ENCODE measurements at regions of chr2 and their contacts with region 1.

Region 1: DNA sequence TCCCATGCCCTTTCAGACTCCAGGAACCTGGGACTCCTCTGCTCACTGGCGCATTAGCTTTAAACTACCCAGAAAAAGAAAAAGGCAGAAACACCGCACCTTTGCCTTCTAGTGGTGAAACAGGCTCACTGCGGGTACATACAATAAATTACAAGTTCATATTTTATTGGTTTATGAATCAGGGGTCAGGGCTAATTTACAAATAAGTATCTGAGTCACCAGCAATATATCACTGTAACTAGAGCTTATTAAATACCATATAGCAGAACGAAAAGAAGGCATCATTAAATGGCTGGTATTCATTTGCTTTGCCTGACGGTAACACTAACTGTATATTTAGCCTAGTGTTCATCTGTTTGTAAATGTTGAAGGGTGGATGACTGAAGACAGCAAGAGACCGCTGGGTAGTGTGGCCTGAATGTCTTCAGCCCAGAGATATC is 26.9 kb upstream of the DTNB start:
- DNase-seq: no peak
- H3K4me3 ChIP-seq: no peak overlapping the region
- H3K27ac ChIP-seq: no peak overlapping the region
- H3K4me1 ChIP-seq: peaks cover 0 to 12% (median 6%) of the 10 kb centered on the region in 4 experiments; a peak in 6 of 7 replicates
- H3K27me3 ChIP-seq: peaks cover 0 to 8% (median under 1%) of the 10 kb centered on the region in 4 experiments; a peak in 2 of 7 replicates
- CTCF ChIP-seq: peak in 2 of 3 experiments; percentile 50 to 74; a peak in 2 of 4 replicates
- EP300 ChIP-seq: no peak
- POLR2A ChIP-seq: no peak
- RAD21 ChIP-seq: peak; percentile 63 to 64

Region 2: DNA sequence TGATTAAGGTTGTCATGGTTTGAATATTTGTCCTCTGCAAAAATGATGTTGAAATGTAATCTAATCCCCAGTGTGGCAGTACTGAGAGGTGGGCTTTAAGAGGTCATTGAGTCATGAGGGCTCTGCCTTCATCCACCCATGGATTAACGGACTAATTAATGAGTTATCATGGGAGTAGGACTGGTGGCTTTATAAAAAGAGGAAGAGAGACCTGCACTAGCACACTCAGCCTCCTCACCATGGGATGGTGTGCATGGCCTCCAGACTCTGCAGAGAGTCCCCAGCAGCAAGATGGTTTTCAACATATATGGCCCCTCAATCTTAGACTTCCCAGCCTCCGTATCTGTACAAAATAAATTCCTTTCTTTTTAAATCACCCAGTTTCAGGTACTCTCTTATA is 67.8 kb before region 1 on chr2:
- CTCF ChIA-PET with region 1: no interaction called
- POLR2A ChIA-PET with region 1: no interaction called
- DNase-seq: no peak
- H3K4me3 ChIP-seq: no peak overlapping the region
- H3K27ac ChIP-seq: no peak overlapping the region
- H3K4me1 ChIP-seq: no peaks in the 10 kb centered on the region
- H3K27me3 ChIP-seq: no peaks in the 10 kb centered on the region
- CTCF ChIP-seq: no peak
- EP300 ChIP-seq: no peak
- POLR2A ChIP-seq: no peak
- RAD21 ChIP-seq: no peak

Region 3: DNA sequence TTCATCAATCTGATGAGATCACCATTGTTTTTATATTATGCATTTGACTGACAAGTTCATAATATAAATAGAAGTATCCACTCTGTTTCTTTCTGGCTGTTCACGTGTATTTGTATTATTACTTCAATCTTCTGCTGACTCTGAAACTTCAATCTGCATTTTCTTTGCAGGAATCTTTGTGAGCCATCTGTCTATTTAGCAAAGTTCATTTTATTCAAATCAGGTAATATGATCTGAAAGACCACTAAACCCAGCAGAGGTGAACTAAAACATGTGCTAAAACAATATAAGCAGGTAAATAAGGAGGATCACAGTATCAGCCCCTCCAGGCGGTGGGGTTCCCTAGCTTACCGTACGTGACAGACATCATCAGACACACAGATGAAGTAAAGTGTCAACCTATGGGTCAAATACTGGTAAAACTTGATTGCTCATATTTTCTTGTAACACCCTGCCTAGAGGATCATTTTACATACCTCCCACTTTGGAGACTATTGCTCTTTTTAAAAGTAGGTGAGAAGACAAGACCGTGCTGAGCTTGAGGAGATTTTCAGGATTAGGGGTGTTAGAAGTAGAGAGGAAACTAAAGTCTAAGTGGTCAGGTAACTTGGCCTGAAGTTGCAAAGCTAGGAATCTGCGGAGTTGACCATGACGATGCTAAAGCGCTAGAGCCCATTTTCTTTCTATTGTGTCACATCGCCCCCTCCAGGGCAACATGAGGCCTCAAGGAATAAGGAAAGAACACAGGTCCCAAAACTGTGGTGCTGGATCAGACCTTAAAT is 35.9 kb before region 1 on chr2:
- CTCF ChIA-PET with region 1: interaction called, 48 read pairs
- POLR2A ChIA-PET with region 1: interaction called, 3 read pairs
- DNase-seq: peak; percentile 43 to 62
- H3K4me3 ChIP-seq: no peak overlapping the region
- H3K27ac ChIP-seq: no peak overlapping the region
- H3K4me1 ChIP-seq: peaks cover 0 to 8% (median 2%) of the 10 kb centered on the region in 4 experiments; a peak in 3 of 7 replicates
- H3K27me3 ChIP-seq: no peaks in the 10 kb centered on the region
- CTCF ChIP-seq: peak; percentile 50 to 87 (median 79)
- EP300 ChIP-seq: no peak
- POLR2A ChIP-seq: no peak
- RAD21 ChIP-seq: peak; percentile 87 to 91

Region 4: DNA sequence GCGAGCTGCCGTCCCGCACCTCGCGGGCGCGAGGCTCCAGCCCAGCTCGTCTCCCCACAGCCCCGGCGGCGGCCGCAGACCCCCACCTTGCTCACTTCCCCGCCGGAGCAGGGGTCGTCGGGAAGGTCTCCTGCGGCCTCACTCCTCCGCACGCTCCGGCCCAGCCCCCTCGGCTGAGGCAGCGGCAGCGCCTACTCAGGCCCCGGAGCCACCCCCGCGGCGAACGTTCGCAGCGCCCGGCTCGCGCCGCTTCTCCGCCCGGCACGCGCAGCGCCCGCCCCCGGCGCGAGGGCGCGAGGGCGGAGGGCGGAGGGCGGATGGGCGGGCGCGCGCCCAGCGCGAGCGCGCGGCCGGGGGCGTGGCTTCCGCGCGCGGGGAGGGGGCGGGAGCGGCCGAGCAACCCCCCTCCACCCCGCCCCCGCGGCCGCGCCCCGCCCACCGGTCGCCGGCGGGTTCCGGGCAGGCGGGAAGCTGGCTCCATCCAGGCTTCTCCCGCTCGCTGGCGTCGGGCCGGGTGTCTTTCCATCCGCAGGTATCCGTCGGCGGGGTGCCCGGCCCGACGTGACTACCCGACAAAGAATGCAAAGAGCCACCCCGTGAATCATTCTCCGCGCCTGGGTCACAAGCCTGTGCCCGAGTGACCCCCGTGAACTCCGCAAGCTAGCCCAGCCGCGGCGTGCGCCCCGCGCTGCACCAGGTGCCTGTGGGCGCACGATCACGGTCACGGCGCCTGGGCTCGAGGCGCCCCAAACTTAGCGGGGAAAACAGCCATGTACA is 26.8 kb before region 1 on chr2 and contains the start of gene DTNB:
- CTCF ChIA-PET with region 1: interaction called, 48 read pairs
- POLR2A ChIA-PET with region 1: interaction called, 3 read pairs
- DNase-seq: peak in 1 of 2 experiments; percentile 91
- H3K4me3 ChIP-seq: peak within 1 kb of the TSS; percentile 62 to 92 (median 76)
- H3K27ac ChIP-seq: peak within 1 kb of the TSS; percentile 84
- H3K4me1 ChIP-seq: peaks cover 11 to 22% (median 15%) of the 10 kb centered on the region in 4 experiments; a peak in 6 of 7 replicates
- H3K27me3 ChIP-seq: peaks cover 0 to 17% (median 9%) of the 10 kb centered on the region in 4 experiments; a peak in 5 of 7 replicates
- CTCF ChIP-seq: no peak
- EP300 ChIP-seq: no peak
- POLR2A ChIP-seq: peak in 1 of 2 experiments; percentile 10; a peak in 1 of 3 replicates
- RAD21 ChIP-seq: no peak
- total RNA-seq, gene DTNB: 40.5 and 49.5 TPM in 2 replicates

Region 5: GRCh38 chr2:25690058-25690457 is 10.2 kb before region 1 on chr2:
- CTCF ChIA-PET with region 1: interaction called, 110 read pairs
- POLR2A ChIA-PET with region 1: interaction called, 4 read pairs
- DNase-seq: no peak
- H3K4me3 ChIP-seq: no peak overlapping the region
- H3K27ac ChIP-seq: no peak overlapping the region
- H3K4me1 ChIP-seq: no peaks in the 10 kb centered on the region; a peak in 1 of 7 replicates
- H3K27me3 ChIP-seq: no peaks in the 10 kb centered on the region
- CTCF ChIP-seq: no peak
- EP300 ChIP-seq: no peak
- POLR2A ChIP-seq: no peak
- RAD21 ChIP-seq: no peak

Region 6: GRCh38 chr2:25714740-25715139 is 14.5 kb after region 1 on chr2:
- CTCF ChIA-PET with region 1: interaction called, 74 read pairs
- POLR2A ChIA-PET with region 1: interaction called, 3 read pairs
- DNase-seq: no peak
- H3K4me3 ChIP-seq: no peak overlapping the region
- H3K27ac ChIP-seq: no peak overlapping the region
- H3K4me1 ChIP-seq: no peaks in the 10 kb centered on the region
- H3K27me3 ChIP-seq: no peaks in the 10 kb centered on the region
- CTCF ChIP-seq: peak in 1 of 3 experiments; percentile 30; a peak in 1 of 4 replicates
- EP300 ChIP-seq: no peak
- POLR2A ChIP-seq: no peak
- RAD21 ChIP-seq: peak; percentile 33 to 58

Measured in H1 (cell line).